ENCODE measurements at regions of chr1 and their contacts with region 1.

Region 1: DNA sequence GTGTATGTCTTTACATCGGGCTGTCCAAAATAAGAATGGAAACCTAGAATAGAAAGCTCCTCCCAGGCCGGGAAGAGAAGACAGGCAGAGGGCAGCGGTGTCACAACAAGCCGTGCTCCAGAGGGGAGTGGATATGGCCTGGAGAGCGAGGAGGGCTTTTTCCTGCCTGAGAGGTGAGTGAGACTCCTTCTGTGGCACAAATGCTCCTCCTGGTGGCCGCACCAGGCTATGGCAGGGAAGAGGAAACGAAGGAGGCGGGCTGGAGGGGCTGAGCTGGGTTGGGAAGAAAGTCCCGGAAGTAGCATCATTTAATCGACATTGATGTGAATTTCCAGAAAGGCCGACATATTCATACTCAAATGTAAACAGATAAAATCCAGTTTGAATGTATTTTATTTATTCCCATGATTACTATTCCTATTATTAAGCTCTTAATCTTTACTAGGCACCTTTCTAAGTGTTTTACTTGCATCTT is 54.7 kb downstream of the MEF2D start:
- DNase-seq: no peak
- ATAC-seq: peak; percentile 95
- H3K4me3 ChIP-seq: no peak overlapping the region
- H3K27ac ChIP-seq: no peak overlapping the region
- H3K4me1 ChIP-seq: no peaks in the 10 kb centered on the region
- H3K27me3 ChIP-seq: peaks cover 7 to 14% of the 10 kb centered on the region in 2 experiments
- CTCF ChIP-seq: peak; percentile 97 to 98 (median 98)
- EP300 ChIP-seq: no peak
- POLR2A ChIP-seq: no peak
- RAD21 ChIP-seq: peak; percentile 99

Region 2: DNA sequence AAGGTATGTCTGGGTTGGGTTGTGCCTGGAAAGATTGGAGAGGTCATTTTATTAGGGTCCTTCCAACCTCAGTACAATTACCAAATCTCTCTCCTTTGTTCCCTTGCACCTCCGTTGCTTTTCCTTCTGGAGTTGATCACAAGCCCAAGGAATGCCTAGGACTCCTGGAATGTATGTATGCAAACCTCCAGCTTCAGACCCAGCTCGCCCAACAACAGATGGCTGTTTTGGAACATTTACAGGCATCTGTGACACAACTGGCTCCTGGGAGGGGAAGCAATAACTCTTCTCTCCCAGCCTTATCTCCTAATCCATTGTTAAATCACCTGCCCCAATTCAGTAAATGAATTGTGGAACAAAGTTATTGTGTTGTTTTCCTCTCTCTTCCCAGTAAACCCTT is 99.2 kb before region 1 on chr1:
- CTCF ChIA-PET with region 1: interaction called, 19 read pairs
- POLR2A ChIA-PET with region 1: no interaction called
- RAD21 ChIA-PET with region 1: interaction called, 3 read pairs
- SMC1A ChIA-PET with region 1: interaction called, 5 read pairs
- in situ Hi-C with region 1: no loop called
- intact Hi-C with region 1: no loop called
- DNase-seq: no peak
- ATAC-seq: no peak
- H3K4me3 ChIP-seq: no peak overlapping the region
- H3K27ac ChIP-seq: no peak overlapping the region
- H3K4me1 ChIP-seq: no peaks in the 10 kb centered on the region
- H3K27me3 ChIP-seq: peaks cover 0 to 5% of the 10 kb centered on the region in 2 experiments; a peak in 1 of 4 replicates
- CTCF ChIP-seq: no peak
- EP300 ChIP-seq: no peak
- POLR2A ChIP-seq: no peak
- RAD21 ChIP-seq: no peak

Region 3: GRCh38 chr1:156388174-156389137 is 57.4 kb before region 1 on chr1:
- CTCF ChIA-PET with region 1: interaction called, 468 read pairs
- POLR2A ChIA-PET with region 1: interaction called, 8 read pairs
- RAD21 ChIA-PET with region 1: interaction called, 162 read pairs
- SMC1A ChIA-PET with region 1: interaction called, 149 read pairs
- in situ Hi-C with region 1: loop called (anchors 5 kb)
- intact Hi-C with region 1: loop called (anchors 1 kb)
- DNase-seq: no peak
- ATAC-seq: peak; percentile 39
- H3K4me3 ChIP-seq: no peak overlapping the region
- H3K27ac ChIP-seq: no peak overlapping the region
- H3K4me1 ChIP-seq: no peaks in the 10 kb centered on the region
- H3K27me3 ChIP-seq: peaks cover 6 to 11% of the 10 kb centered on the region in 2 experiments
- CTCF ChIP-seq: no peak
- EP300 ChIP-seq: no peak
- POLR2A ChIP-seq: no peak
- RAD21 ChIP-seq: no peak

Region 4: GRCh38 chr1:156421062-156421938 is 24.5 kb before region 1 on chr1:
- CTCF ChIA-PET with region 1: interaction called, 26 read pairs
- POLR2A ChIA-PET with region 1: no interaction called
- RAD21 ChIA-PET with region 1: interaction called, 13 read pairs
- SMC1A ChIA-PET with region 1: interaction called, 16 read pairs
- in situ Hi-C with region 1: no loop called
- intact Hi-C with region 1: loop called (anchors 2 kb)
- DNase-seq: peak; percentile 39
- ATAC-seq: peak; percentile 88
- H3K4me3 ChIP-seq: peak overlapping the region; percentile 75
- H3K27ac ChIP-seq: peak overlapping the region; percentile 33; the same call in 1 of the 2 replicates
- H3K4me1 ChIP-seq: peaks cover 8% of the 10 kb centered on the region
- H3K27me3 ChIP-seq: peaks cover 6 to 13% of the 10 kb centered on the region in 2 experiments
- CTCF ChIP-seq: no peak
- EP300 ChIP-seq: no peak
- POLR2A ChIP-seq: peak; percentile 82
- RAD21 ChIP-seq: no peak

Region 5: GRCh38 chr1:156465747-156466365 is 20.0 kb after region 1 on chr1:
- CTCF ChIA-PET with region 1: interaction called, 16 read pairs
- POLR2A ChIA-PET with region 1: no interaction called
- RAD21 ChIA-PET with region 1: no interaction called
- SMC1A ChIA-PET with region 1: interaction called, 4 read pairs
- in situ Hi-C with region 1: no loop called
- intact Hi-C with region 1: no loop called
- DNase-seq: no peak
- ATAC-seq: peak; percentile 40
- H3K4me3 ChIP-seq: no peak overlapping the region
- H3K27ac ChIP-seq: no peak overlapping the region
- H3K4me1 ChIP-seq: no peaks in the 10 kb centered on the region
- H3K27me3 ChIP-seq: no peaks in the 10 kb centered on the region
- CTCF ChIP-seq: peak; percentile 12 to 25 (median 19); a peak in 3 of 6 replicates
- EP300 ChIP-seq: no peak
- POLR2A ChIP-seq: no peak
- RAD21 ChIP-seq: peak; percentile 49

Region 6: GRCh38 chr1:156608036-156608674 is 162.3 kb after region 1 on chr1:
- CTCF ChIA-PET with region 1: interaction called, 25 read pairs
- POLR2A ChIA-PET with region 1: interaction called, 3 read pairs
- RAD21 ChIA-PET with region 1: interaction called, 8 read pairs
- SMC1A ChIA-PET with region 1: interaction called, 8 read pairs
- in situ Hi-C with region 1: loop called (anchors 10 kb)
- intact Hi-C with region 1: no loop called
- DNase-seq: peak; percentile 62
- ATAC-seq: peak; percentile 99
- H3K4me3 ChIP-seq: no peak overlapping the region
- H3K27ac ChIP-seq: no peak overlapping the region
- H3K4me1 ChIP-seq: 0 out of 2 replicates have a peak, but pooled peaks cover 4% of the 10 kb centered on the region
- H3K27me3 ChIP-seq: peaks cover 0 to 3% of the 10 kb centered on the region in 2 experiments; a peak in 2 of 4 replicates
- CTCF ChIP-seq: peak; percentile 75 to 93 (median 78)
- EP300 ChIP-seq: no peak
- POLR2A ChIP-seq: no peak
- RAD21 ChIP-seq: peak; percentile 80

Region 7: DNA sequence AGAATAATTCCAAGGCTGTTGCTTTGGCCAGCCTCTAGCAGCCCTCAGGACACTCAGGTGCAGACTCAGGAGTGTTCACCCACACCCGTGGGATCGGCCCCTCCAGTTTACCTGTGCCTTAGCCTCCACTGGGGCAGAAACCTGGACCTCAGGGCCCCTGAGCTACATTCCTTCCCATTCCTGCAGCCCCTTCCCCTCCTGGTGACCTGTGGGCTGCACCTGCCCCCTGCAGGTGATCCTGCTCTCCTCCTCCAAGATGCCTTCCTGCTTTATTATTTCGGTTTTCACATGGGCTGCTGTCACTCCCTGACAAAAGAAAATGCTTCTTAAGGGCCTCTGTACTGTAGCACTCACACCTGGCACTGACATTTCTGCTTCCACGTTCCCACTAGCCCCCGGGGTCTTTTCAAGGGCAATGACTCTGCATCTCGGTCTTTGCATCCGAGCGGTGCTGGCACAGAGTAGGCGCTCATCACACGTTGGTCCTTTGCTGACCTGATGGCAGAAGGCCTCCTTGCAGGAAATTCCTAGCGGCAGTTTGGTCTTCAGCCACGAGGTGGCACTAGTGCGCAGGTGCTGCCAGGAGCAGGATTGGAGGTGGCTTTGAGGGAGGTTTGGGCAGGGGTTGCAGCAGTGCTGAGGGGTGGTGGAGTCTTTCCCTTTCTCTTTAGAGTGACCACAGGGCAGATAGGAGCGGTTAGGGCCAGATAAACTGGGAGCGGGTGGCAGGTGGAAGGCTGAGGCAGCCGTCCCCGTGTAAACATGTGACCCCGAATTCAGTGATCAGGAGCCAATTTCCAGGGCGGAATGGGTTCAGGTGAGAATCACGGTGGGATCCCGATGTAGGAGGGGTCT is 717.7 kb after region 1 on chr1:
- CTCF ChIA-PET with region 1: no interaction called
- POLR2A ChIA-PET with region 1: no interaction called
- RAD21 ChIA-PET with region 1: no interaction called
- SMC1A ChIA-PET with region 1: no interaction called
- in situ Hi-C with region 1: no loop called
- intact Hi-C with region 1: no loop called
- DNase-seq: no peak
- ATAC-seq: peak; percentile 77
- H3K4me3 ChIP-seq: no peak overlapping the region
- H3K27ac ChIP-seq: no peak overlapping the region
- H3K4me1 ChIP-seq: peaks cover 16% of the 10 kb centered on the region
- H3K27me3 ChIP-seq: peaks cover 0 to 2% of the 10 kb centered on the region in 2 experiments; a peak in 1 of 4 replicates
- CTCF ChIP-seq: peak; percentile 72 to 94 (median 90)
- EP300 ChIP-seq: no peak
- POLR2A ChIP-seq: no peak
- RAD21 ChIP-seq: peak; percentile 72